Activated CD4-positive, alpha-beta T cell treated with anti-CD3 and anti-CD28 coated beads, Interleukin-2, amount 10 ng/mL, durations not matched to agents 24 days and 14 days (primary cell): ENCODE measurements at regions of chr19 and their contacts with region 1.

Region 1: GRCh38 chr19:28737021-28737895 is 475.7 kb downstream of the UQCRFS1 start:
- DNase-seq: peak; percentile 77
- H3K4me3 Mint-ChIP-seq: no peak overlapping the region
- H3K27ac Mint-ChIP-seq: peak overlapping the region; percentile 25
- H3K4me1 Mint-ChIP-seq: peaks cover 7% of the 10 kb centered on the region
- H3K27me3 Mint-ChIP-seq: peaks cover 10% of the 10 kb centered on the region

Region 2: GRCh38 chr19:28878862-28879566 is 141.8 kb after region 1 on chr19:
- intact Hi-C with region 1: loop called (anchors 1 kb)
- DNase-seq: peak; percentile 88
- H3K4me3 Mint-ChIP-seq: no peak overlapping the region
- H3K27ac Mint-ChIP-seq: no peak overlapping the region
- H3K4me1 Mint-ChIP-seq: no peaks in the 10 kb centered on the region
- H3K27me3 Mint-ChIP-seq: peaks cover 3% of the 10 kb centered on the region

Region 3: GRCh38 chr19:29263305-29264135 is 526.3 kb after region 1 on chr19:
- intact Hi-C with region 1: loop called (anchors 5 kb)
- DNase-seq: peak; percentile 86
- H3K4me3 Mint-ChIP-seq: no peak overlapping the region
- H3K27ac Mint-ChIP-seq: no peak overlapping the region
- H3K4me1 Mint-ChIP-seq: no peaks in the 10 kb centered on the region
- H3K27me3 Mint-ChIP-seq: peaks cover 4% of the 10 kb centered on the region

Region 4: DNA sequence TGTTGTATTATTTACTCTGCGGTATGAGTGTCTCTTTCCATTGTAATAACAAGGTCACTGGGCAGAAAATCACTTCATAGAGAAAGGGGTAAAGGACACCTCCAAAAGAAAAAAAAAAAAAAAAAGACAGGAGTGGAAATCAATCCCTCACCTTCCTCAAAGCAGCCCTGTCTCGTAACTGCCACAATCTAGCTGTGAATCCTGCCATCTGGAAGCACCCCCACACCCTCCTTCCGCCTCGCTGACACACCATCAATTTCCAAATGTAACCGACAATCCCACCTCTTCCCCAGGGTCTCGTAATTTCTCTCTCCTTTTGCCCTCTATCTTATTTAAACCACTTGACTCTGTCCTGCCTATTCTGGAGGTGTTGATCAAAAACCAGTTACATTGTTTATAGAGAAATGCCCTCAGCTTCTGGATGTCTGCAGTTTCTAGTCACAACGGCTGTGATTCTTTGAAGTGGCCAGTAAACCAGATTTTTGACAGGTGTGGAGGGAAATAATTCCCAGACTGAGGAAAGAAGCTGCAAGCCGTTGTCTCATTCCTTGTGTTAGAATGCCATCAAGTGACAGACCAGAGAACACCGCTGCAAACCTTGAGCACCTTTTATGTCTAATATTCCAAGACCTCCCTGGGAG is 859.7 kb after region 1 on chr19:
- intact Hi-C with region 1: loop called (anchors 5 kb)
- DNase-seq: no peak
- H3K4me3 Mint-ChIP-seq: no peak overlapping the region
- H3K27ac Mint-ChIP-seq: no peak overlapping the region
- H3K4me1 Mint-ChIP-seq: peaks cover 2% of the 10 kb centered on the region
- H3K27me3 Mint-ChIP-seq: peaks cover 38% of the 10 kb centered on the region